ENCODE measurements at regions of chr19 and their contacts with region 1.

Region 1: DNA sequence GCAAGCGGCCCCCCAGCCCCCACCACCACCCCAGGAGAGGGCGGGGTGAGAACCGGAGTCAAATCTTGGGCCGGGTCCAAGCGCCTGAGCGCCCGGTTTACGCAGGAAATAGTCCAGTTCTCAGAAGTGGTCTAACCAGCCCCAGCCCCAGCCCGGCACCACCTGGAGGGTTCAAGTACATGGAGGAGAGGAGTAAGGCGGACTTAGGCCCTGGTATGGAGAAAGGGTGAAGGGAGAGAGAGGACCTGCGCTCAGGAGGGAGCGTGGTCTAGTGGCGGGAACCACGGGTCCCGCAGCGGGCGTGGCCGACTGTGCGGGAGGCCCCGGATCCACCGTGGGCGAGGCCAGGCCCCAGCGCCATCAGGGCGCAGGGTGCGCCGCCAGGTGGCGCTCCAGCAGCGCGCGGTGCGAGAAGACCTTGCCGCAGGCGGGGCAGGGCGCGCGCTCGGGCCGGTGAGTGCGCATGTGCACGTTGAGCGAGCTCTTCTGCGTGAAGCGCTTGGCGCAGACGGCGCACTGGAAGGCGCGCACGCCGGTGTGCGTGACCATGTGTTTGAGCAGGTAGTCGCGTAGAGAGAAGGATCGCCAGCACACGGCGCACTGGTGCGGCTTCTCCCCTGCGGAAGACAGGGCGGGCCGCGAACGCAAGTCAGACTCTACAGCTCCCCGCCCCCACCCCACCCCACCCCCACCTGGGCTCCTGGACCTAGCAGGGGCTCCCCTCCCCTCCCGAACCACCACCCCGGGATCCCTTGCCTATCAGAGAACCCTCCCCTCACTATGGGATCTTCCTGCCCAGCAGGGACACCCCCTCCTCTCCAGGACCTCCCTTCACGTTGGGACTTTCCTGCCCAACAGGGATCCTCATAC is 2.1 kb upstream of the SLC27A5 start:
- DNase-seq: peak; percentile 96
- H3K4me3 Mint-ChIP-seq: peak overlapping the region; percentile 88
- H3K27ac Mint-ChIP-seq: peak overlapping the region; percentile 83
- H3K4me1 Mint-ChIP-seq: peaks cover 36% of the 10 kb centered on the region
- H3K27me3 Mint-ChIP-seq: no peaks in the 10 kb centered on the region

Region 2: DNA sequence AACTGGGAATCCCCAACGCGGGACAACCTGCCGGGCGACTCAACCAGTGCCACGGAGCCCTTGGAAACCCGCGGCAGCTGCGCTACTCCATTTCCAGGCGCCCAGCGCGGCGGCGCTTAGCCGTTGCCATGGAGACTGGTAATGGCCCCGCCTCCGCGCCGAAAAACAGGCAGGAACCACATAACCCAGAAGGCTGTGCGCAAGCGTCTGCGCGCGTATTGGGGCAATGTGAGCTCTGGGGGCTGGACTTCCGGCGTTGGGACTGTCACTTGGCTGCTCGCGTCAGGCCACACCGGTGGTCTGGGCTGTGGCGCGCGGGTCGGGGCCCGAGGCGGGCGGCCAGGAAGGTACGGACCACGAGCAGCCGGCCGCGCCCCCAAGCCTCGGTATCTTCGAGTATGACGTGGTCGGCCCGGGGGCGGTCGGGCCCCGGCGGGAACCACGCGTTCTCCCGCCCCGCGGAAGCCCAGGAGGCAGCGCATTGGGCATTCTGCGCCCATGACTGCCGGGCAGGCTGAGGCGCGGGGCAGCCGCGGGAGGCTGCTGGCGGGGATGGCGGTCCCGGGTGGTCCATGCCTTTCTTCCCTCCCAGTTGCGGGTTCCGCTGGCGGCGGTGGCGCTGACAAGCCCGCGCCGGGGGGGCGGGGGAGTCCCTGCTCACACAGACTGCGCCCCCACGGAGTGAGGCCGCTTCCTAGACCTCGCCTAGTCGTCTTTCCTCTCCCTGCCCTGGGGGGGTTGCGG is 62.4 kb before region 1 on chr19 and contains the start of gene ZNF324B:
- CTCF ChIA-PET with region 1: no interaction called
- intact Hi-C with region 1: no loop called
- DNase-seq: peak; percentile 97
- H3K4me3 Mint-ChIP-seq: peak within 1 kb of the TSS; percentile 79
- H3K27ac Mint-ChIP-seq: no peak within 1 kb of the TSS
- H3K4me1 Mint-ChIP-seq: peaks cover 21% of the 10 kb centered on the region
- H3K27me3 Mint-ChIP-seq: peaks cover 11% of the 10 kb centered on the region
- total RNA-seq, gene ZNF324B: 5.8 to 6.2 TPM

Region 3: DNA sequence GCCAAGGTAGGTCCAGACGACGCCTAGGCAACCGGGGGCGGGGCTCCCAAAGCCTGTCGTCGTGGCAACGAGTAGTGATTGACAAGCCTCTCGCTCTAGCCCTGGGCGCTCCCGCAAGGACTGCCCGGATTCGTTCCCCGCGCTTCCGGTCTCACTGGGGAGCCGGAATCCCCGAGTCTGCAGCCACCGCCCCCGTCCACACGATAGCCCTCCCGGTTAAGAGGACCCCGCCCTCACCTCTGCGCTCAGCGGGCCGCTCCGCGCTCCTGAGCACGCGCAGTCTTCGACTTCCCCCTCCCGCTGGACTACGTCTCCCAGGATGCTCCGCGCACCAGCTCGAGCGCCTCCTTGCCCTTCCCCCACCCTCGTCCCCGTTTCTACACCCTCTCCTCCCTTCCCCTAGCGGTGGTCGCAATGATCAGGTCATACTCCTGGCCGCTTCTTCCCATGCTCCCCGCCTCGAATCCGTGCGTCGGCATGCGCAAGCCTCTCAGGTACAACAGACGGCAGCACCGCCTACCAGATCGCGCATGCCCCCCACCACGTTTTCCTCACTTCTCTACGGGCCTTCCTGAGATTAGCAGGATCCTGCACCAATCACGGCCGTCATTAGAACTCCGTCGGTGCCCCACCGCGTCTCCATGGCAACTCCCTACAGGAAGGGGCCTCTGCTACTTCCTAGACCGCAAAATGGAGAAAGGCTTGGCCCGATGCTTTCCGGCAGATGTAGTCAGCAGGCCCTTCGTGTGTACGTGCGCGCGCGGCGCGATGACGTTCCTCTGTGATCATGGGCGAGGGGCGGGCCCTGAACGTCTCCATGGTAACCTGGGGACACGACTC is 59.1 kb after region 1 on chr19 and contains the start of gene MZF1:
- CTCF ChIA-PET with region 1: interaction called, 3 read pairs
- intact Hi-C with region 1: loop called (anchors 1 kb)
- DNase-seq: peak; percentile 100
- H3K4me3 Mint-ChIP-seq: peak within 1 kb of the TSS; percentile 96
- H3K27ac Mint-ChIP-seq: peak within 1 kb of the TSS; percentile 99
- H3K4me1 Mint-ChIP-seq: peaks cover 39% of the 10 kb centered on the region
- H3K27me3 Mint-ChIP-seq: no peaks in the 10 kb centered on the region
- total RNA-seq, gene MZF1: 13.3 to 13.4 TPM

Region 4: GRCh38 chr19:58581227-58582151 is 67.6 kb after region 1 on chr19:
- CTCF ChIA-PET with region 1: interaction called, 52 read pairs
- intact Hi-C with region 1: loop called (anchors 1 kb)
- DNase-seq: peak; percentile 98
- H3K4me3 Mint-ChIP-seq: no peak overlapping the region
- H3K27ac Mint-ChIP-seq: peak overlapping the region; percentile 71
- H3K4me1 Mint-ChIP-seq: peaks cover 28% of the 10 kb centered on the region
- H3K27me3 Mint-ChIP-seq: no peaks in the 10 kb centered on the region

Measured in activated naive CD4-positive, alpha-beta T cell treated with anti-CD3 and anti-CD28 coated beads for 36 hours (primary cell).